Lower lobe of right lung (tissue), 2 donors: ENCODE measurements at regions of chr15 and their contacts with region 1.

Region 1: GRCh38 chr15:99755692-99756409 is 22.6 kb upstream of the LYSMD4 start:
- DNase-seq: peak; percentile 57
- ATAC-seq: peak; percentile 83 to 85
- H3K4me3 ChIP-seq: no peak overlapping the region
- H3K27ac ChIP-seq: no peak overlapping the region
- H3K4me1 ChIP-seq: no peaks in the 10 kb centered on the region
- H3K27me3 ChIP-seq: no peaks in the 10 kb centered on the region
- CTCF ChIP-seq: peak; percentile 78

Region 2: GRCh38 chr15:99275525-99276128 is 480.2 kb before region 1 on chr15:
- intact Hi-C with region 1: loop called (anchors 10 kb)
- DNase-seq: no peak
- ATAC-seq: no peak
- H3K4me3 ChIP-seq: no peak overlapping the region
- H3K27ac ChIP-seq: no peak overlapping the region
- H3K4me1 ChIP-seq: no peaks in the 10 kb centered on the region
- H3K27me3 ChIP-seq: no peaks in the 10 kb centered on the region
- CTCF ChIP-seq: no peak

Region 3: DNA sequence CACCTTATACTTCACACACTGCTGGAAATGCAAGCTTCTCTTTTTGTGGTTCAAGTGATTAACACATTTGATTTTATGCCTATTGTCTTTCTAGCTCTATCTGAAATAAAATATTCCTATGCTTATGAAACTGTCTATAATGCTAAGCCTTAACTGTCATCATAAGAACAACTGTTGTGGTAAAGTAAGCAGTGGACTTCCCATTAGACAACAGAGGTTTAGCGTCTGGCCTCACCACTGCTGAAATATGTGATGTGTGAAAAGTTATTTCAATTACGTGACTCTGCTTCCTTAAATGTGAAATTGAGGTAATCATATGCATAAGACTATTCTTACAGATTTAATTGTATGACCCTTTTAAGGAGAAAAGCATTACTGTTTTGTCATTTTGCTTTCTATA is 117.6 kb after region 1 on chr15:
- intact Hi-C with region 1: no loop called
- DNase-seq: no peak
- ATAC-seq: no peak
- H3K4me3 ChIP-seq: no peak overlapping the region
- H3K27ac ChIP-seq: no peak overlapping the region
- H3K4me1 ChIP-seq: no peaks in the 10 kb centered on the region
- H3K27me3 ChIP-seq: no peaks in the 10 kb centered on the region
- CTCF ChIP-seq: no peak

Region 4: DNA sequence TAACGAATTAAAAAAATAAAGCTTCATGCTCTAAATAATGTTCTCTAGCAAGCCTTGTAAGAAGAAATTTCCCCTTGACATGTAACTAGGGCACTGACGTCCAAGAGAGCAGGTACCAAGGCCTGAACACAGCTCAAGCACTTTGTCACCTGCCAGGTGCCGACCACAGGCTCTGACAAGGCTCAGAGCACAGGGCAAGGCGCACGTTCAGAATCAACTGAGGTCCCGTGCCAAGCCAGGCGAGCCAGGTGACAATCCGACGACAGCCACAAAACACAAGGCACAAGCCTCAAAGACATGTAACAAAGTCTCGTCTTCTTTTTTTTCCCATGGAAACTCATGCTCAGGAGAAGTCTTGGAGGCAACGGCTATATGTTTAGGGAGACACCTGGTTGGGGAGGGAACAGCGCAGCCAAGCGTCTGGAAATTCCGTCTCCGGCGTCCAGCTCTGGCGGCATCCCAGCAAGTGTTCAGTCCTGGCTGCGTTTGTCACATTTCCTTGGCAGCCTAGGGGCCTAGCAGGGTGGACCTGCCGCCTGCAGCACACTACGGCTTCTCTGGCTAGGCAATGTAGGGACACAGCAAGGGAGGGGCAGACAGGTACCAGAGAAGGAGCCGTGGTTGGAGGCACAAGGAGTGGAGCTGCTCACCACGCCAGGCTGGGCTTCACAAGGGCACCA is 509.3 kb after region 1 on chr15:
- intact Hi-C with region 1: no loop called
- DNase-seq: no peak
- ATAC-seq: no peak
- H3K4me3 ChIP-seq: no peak overlapping the region
- H3K27ac ChIP-seq: no peak overlapping the region
- H3K4me1 ChIP-seq: no peaks in the 10 kb centered on the region
- H3K27me3 ChIP-seq: no peaks in the 10 kb centered on the region
- CTCF ChIP-seq: no peak